Activated B cell treated with CpG ODN at 0.5 μM for 24 hours (primary cell): ENCODE measurements at regions of chr3 and their contacts with region 1.

Region 1: GRCh38 chr3:53938645-53939044 is 47.0 kb upstream of the SELENOK start:
- DNase-seq: no peak
- ATAC-seq: peak; percentile 45
- H3K4me3 Mint-ChIP-seq: no peak overlapping the region
- H3K27ac Mint-ChIP-seq: no peak overlapping the region
- H3K4me1 Mint-ChIP-seq: no peaks in the 10 kb centered on the region
- H3K27me3 Mint-ChIP-seq: peaks cover 23% of the 10 kb centered on the region
- CTCF ChIP-seq: no peak

Region 2: GRCh38 chr3:52831500-52832301 is 1106.9 kb before region 1 on chr3:
- CTCF ChIA-PET with region 1: no interaction called
- POLR2A ChIA-PET with region 1: no interaction called
- intact Hi-C with region 1: no loop called
- DNase-seq: no peak
- ATAC-seq: no peak
- H3K4me3 Mint-ChIP-seq: no peak overlapping the region
- H3K27ac Mint-ChIP-seq: no peak overlapping the region
- H3K4me1 Mint-ChIP-seq: no peaks in the 10 kb centered on the region
- H3K27me3 Mint-ChIP-seq: no peaks in the 10 kb centered on the region
- CTCF ChIP-seq: no peak

Region 3: GRCh38 chr3:53974324-53974723 is 35.7 kb after region 1 on chr3:
- CTCF ChIA-PET with region 1: no interaction called
- POLR2A ChIA-PET with region 1: no interaction called
- intact Hi-C with region 1: no loop called
- DNase-seq: no peak
- ATAC-seq: no peak
- H3K4me3 Mint-ChIP-seq: no peak overlapping the region
- H3K27ac Mint-ChIP-seq: no peak overlapping the region
- H3K4me1 Mint-ChIP-seq: no peaks in the 10 kb centered on the region
- H3K27me3 Mint-ChIP-seq: peaks cover 5% of the 10 kb centered on the region
- CTCF ChIP-seq: no peak

Region 4: DNA sequence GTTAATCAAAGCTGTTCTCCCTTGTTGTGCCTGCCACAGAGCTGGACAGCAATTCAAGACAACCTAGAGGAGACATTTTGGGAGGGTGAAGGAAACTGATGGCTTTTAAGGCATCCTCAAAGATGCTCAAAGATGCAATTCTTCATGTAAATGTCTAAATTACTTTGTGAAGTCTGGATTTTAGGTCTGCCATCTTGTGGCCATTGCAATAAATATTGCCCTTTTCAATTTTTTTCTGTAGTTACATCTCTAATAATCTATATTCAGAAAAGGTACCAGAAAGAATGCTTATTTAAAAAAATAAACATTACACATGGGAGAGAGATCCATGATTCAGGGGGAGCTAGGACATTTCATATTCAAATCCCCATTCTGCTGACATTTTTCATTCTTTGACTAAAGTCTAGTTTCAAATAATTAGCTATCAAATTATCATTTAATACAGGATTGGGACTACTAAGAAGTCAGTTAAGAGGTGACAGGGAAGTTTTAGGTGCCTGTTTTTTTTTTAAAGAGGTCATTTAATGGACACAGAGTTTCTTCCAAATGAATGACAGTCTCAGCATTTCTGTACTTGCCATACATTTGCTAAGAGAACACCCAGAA is 1808.3 kb after region 1 on chr3:
- CTCF ChIA-PET with region 1: no interaction called
- POLR2A ChIA-PET with region 1: no interaction called
- intact Hi-C with region 1: loop called (anchors 10 kb)
- DNase-seq: no peak
- ATAC-seq: no peak
- H3K4me3 Mint-ChIP-seq: no peak overlapping the region
- H3K27ac Mint-ChIP-seq: no peak overlapping the region
- H3K4me1 Mint-ChIP-seq: no peaks in the 10 kb centered on the region
- H3K27me3 Mint-ChIP-seq: no peaks in the 10 kb centered on the region
- CTCF ChIP-seq: no peak